OCI-LY7 (cell line): ENCODE measurements at regions of chr1 and their contacts with region 1.

Region 1: GRCh38 chr1:171781176-171781875 is at the start of gene METTL13:
- DNase-seq: peak; percentile 98
- H3K4me3 ChIP-seq: peak within 1 kb of the TSS; percentile 93
- H3K27ac ChIP-seq: peak within 1 kb of the TSS; percentile 78
- H3K4me1 ChIP-seq: peaks cover 34% of the 10 kb centered on the region
- CTCF ChIP-seq: no peak
- total RNA-seq, gene METTL13: 22.2 and 28.3 TPM in 2 replicates

Region 2: DNA sequence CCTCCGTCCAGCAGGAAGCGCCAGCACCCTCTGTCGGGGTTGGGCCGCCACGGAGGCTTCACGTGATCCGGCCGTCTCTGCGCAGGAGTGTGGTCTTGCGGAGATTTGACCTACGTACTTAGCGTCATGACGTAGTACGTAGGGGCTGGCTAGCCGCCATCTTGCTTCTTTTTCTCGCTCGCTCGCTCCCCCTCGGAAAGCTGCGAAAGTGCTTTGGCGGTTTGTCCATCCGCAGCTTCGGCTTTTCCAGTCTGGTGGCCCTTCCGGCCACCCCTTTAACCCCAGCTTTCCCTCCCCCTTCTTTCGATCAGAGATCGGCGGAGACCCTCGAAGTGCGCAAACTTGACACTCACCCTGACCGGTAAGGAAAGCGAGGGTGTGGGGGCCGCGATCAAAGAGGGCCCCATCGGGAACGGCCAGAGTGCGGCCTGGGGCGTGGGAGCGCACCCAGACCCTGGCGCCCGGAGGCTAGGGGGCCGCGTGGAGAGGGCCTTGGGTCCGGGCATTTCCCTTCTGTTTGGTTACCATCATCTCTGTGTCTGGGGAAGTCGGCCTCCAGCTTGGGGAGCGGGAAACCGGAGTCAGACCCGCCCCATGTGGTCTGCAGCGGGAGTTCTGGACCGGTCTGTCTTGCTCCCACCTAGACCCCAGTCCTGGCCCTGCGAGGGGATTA is 295.8 kb before region 1 on chr1 and contains the start of gene PRRC2C:
- CTCF ChIA-PET with region 1: no interaction called
- POLR2A ChIA-PET with region 1: no interaction called
- intact Hi-C with region 1: loop called (anchors 5 kb)
- DNase-seq: peak; percentile 98
- H3K4me3 ChIP-seq: peak within 1 kb of the TSS; percentile 97
- H3K27ac ChIP-seq: peak within 1 kb of the TSS; percentile 87
- H3K4me1 ChIP-seq: peaks cover 38% of the 10 kb centered on the region
- CTCF ChIP-seq: peak; percentile 86
- total RNA-seq, gene PRRC2C: 73.5 and 75.3 TPM in 2 replicates

Region 3: GRCh38 chr1:171644805-171645483 is 136.4 kb before region 1 on chr1:
- CTCF ChIA-PET with region 1: no interaction called
- POLR2A ChIA-PET with region 1: interaction called, 5 read pairs
- intact Hi-C with region 1: loop called (anchors 5 kb)
- DNase-seq: peak; percentile 80
- H3K4me3 ChIP-seq: no peak overlapping the region
- H3K27ac ChIP-seq: no peak overlapping the region
- H3K4me1 ChIP-seq: no peaks in the 10 kb centered on the region
- CTCF ChIP-seq: peak; percentile 86

Region 4: GRCh38 chr1:171674431-171675405 is 106.6 kb before region 1 on chr1:
- CTCF ChIA-PET with region 1: no interaction called
- POLR2A ChIA-PET with region 1: no interaction called
- intact Hi-C with region 1: no loop called
- DNase-seq: no peak
- H3K4me3 ChIP-seq: no peak overlapping the region
- H3K27ac ChIP-seq: no peak overlapping the region
- H3K4me1 ChIP-seq: no peaks in the 10 kb centered on the region
- CTCF ChIP-seq: no peak

Region 5: GRCh38 chr1:171741872-171742576 is 39.3 kb before region 1 on chr1 and contains the start of gene VAMP4:
- CTCF ChIA-PET with region 1: interaction called, 3 read pairs
- POLR2A ChIA-PET with region 1: interaction called, 53 read pairs
- intact Hi-C with region 1: loop called (anchors 1 kb)
- DNase-seq: peak; percentile 90
- H3K4me3 ChIP-seq: peak within 1 kb of the TSS; percentile 85
- H3K27ac ChIP-seq: peak within 1 kb of the TSS; percentile 66
- H3K4me1 ChIP-seq: peaks cover 30% of the 10 kb centered on the region
- CTCF ChIP-seq: no peak
- total RNA-seq, gene VAMP4: 3.2 and 3.4 TPM in 2 replicates

Region 6: DNA sequence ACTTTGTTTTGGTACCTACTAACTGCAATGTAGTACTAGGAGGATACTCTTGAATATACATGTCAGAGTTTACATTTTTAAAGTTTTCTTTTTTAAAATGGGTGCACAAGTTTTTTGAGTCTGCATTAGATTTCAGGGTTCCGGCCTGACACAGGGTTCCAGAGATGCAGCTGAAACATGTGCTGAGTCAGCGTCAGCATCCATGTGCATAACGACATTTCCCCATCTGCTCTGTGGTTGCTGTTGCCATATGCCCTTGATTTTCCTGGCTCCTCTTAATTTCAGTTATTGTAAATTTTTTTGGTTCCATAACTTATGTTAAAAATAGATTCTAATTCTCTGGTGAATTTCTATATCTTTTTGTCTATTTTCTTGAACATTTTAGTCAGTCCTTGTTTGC is 12.2 kb before region 1 on chr1:
- CTCF ChIA-PET with region 1: no interaction called
- POLR2A ChIA-PET with region 1: interaction called, 12 read pairs
- intact Hi-C with region 1: no loop called
- DNase-seq: no peak
- H3K4me3 ChIP-seq: no peak overlapping the region
- H3K27ac ChIP-seq: no peak overlapping the region
- H3K4me1 ChIP-seq: no peaks in the 10 kb centered on the region
- CTCF ChIP-seq: no peak